ENCODE measurements at regions of chr11 and their contacts with region 1.

Region 1: DNA sequence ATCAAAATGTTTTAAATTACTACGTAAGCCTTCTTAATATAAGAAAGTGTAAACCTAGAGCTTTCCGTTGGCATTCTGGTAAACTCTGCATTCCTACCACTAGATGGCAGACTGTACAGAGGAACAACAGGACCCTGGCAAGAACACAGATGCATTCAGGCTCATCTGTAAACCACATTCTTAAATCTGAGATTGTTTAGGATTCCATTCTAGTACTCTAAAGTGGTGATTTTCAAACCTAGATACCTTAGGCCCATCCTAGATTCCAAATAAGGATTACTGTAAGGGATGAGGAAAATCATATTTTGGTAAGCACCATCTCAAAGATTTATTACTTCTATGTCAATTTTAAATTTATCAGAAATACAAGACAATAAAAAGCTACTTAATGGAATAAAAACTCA is 26.9 kb downstream of the PICALM start:
- DNase-seq: peak; percentile 68 to 81 (median 81)
- H3K4me3 ChIP-seq: peak overlapping the region in 1 of 3 experiments; percentile 31
- H3K4me3 Mint-ChIP-seq: no peak overlapping the region
- H3K27ac ChIP-seq: peak overlapping the region in 1 of 2 donors; percentile 66
- H3K27ac Mint-ChIP-seq: peak overlapping the region in 5 of 7 donors; percentile 11 to 77 (median 47)
- H3K4me1 ChIP-seq: peaks cover 52 to 64% of the 10 kb centered on the region in 2 donors
- H3K4me1 Mint-ChIP-seq: peaks cover 58% of the 10 kb centered on the region
- H3K27me3 ChIP-seq: no peaks in the 10 kb centered on the region
- H3K27me3 Mint-ChIP-seq: no peaks in the 10 kb centered on the region
- CTCF ChIP-seq: peak; percentile 83

Region 2: DNA sequence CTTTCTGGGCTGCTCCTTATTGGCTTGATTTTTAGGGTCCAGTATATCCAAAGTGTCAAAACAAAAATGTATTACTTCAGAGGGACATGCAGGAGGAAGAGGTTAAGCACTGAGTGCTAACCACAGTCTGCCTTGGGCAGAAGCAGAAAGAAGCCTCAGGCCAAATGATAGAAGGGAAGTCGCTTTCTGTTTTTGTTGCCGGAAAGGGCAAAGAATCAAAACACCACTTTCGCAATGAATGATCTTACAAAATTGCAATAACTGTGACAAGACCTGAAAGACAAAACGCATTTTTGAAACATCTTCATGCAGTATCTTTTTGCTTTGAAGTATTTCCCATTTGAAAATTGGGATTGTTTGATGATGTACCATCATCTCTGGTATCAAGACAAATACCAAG is 97.0 kb after region 1 on chr11:
- intact Hi-C with region 1: loop called in 1 of 2 experiments (anchors 5 kb)
- DNase-seq: peak; percentile 80 to 94 (median 85)
- H3K4me3 ChIP-seq: peak overlapping the region in 1 of 3 experiments; percentile 18
- H3K4me3 Mint-ChIP-seq: peak overlapping the region in 1 of 2 donors; percentile 58
- H3K27ac ChIP-seq: peak overlapping the region; percentile 3 to 93
- H3K27ac Mint-ChIP-seq: peak overlapping the region; percentile 92 to 99 (median 97)
- H3K4me1 ChIP-seq: peaks cover 98 to 100% of the 10 kb centered on the region in 2 donors
- H3K4me1 Mint-ChIP-seq: peaks cover 96% of the 10 kb centered on the region
- H3K27me3 ChIP-seq: no peaks in the 10 kb centered on the region
- H3K27me3 Mint-ChIP-seq: no peaks in the 10 kb centered on the region
- CTCF ChIP-seq: no peak

Region 3: GRCh38 chr11:86202013-86202336 is 160.0 kb after region 1 on chr11:
- intact Hi-C with region 1: loop called in 1 of 2 experiments (anchors 5 kb)
- DNase-seq: peak; percentile 62 to 73 (median 69)
- H3K4me3 ChIP-seq: peak overlapping the region; percentile 34 to 74 (median 71)
- H3K4me3 Mint-ChIP-seq: no peak overlapping the region
- H3K27ac ChIP-seq: peak overlapping the region; percentile 89 to 95
- H3K27ac Mint-ChIP-seq: no peak overlapping the region
- H3K4me1 ChIP-seq: peaks cover 64 to 78% of the 10 kb centered on the region in 2 donors
- H3K4me1 Mint-ChIP-seq: peaks cover 19% of the 10 kb centered on the region
- H3K27me3 ChIP-seq: no peaks in the 10 kb centered on the region
- H3K27me3 Mint-ChIP-seq: no peaks in the 10 kb centered on the region
- CTCF ChIP-seq: no peak

Region 4: DNA sequence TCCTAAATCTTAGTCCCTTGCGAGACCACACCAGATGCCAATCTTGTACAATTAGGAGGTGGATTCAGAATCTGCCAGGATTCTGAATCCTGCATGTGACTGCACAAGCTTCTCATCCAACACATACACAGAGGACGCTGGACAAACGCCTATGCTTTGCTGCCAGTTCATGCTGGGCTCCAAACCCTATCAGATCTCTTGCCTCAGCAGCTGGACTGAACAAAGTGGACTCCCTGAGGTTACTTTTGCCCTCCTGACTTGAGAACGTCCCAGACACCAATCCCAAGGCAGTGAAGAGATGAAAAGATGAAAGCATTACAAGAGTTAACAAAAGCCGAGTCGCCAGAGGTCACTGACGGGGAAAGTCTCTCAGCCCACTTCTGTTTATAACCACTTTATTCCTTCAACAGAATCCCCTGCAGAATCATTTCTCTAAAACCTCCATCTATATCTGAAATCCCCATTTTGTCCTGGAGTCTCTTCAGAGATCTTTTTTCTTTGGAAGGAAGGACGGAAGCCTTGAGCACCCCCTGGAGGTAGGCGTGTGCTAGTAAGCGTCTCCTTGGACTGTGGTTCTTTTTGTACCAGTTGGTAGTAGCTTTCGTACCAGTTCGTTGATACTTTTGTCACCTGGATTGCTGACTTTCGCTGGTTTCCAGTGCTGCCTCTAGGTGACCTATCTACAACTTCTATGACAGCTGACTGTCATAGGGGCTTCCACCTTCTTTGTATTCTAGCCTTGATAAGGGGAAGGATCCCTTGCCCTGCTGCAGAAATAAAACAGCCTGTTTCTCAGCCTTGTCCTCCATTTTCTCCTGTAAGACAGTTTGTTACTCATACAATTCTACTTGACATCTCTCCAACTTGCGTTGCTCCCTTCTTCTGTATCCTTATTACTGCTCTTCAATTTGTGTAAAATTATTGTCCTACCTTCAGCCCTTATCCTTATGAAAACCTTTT is 176.4 kb after region 1 on chr11:
- intact Hi-C with region 1: loop called (anchors 5 kb)
- DNase-seq: peak; percentile 58 to 77 (median 76)
- H3K4me3 ChIP-seq: peak overlapping the region in 1 of 3 experiments; percentile 47
- H3K4me3 Mint-ChIP-seq: peak overlapping the region; percentile 56 to 73
- H3K27ac ChIP-seq: no peak overlapping the region
- H3K27ac Mint-ChIP-seq: peak overlapping the region in 3 of 7 donors; percentile 10 to 68 (median 51)
- H3K4me1 ChIP-seq: peaks cover 19 to 22% of the 10 kb centered on the region in 2 donors
- H3K4me1 Mint-ChIP-seq: peaks cover 28% of the 10 kb centered on the region
- H3K27me3 ChIP-seq: no peaks in the 10 kb centered on the region
- H3K27me3 Mint-ChIP-seq: peaks cover 0 to 2% (median 0%) of the 10 kb centered on the region in 3 donors
- CTCF ChIP-seq: peak; percentile 94

Region 5: DNA sequence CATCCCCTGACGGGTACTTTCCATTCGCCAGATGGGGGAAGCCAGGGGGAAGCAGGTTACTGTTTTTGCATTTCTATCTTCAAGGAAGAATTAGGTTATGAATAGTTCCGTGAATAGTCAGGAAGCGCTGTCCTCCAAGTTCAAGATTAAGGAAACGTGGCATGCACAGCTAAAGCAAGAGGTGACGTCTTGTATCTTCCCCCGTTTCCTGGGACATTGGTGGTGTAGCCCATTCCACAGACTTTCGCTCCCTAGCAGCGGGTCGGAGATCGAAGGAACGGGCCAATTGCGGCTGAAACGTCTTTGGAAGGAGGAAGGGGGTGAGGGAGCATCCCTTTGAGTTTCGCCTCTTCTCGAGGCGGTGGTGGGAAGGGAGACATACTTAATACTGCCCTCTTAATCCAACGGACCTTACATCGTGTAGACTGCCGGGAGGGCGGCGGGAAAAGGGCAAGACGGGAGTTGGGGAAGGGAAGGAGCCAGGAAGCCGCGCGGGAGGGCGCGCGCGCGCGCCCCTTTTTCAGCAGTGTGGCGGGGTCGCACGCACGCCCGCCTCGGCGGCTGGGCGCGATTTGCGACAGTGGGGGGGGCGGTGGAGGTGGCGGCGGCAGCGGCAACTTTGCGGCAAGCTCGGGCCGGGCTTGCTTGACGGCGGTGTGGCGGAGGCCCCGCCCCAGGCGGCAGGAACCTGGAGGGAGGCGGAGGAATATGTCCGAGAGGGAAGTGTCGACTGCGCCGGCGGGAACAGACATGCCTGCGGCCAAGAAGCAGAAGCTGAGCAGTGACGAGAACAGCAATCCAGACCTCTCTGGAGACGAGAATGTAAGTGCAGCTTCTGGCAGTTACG is 202.8 kb after region 1 on chr11 and contains the start of gene EED:
- intact Hi-C with region 1: loop called in 1 of 2 experiments (anchors 5 kb)
- DNase-seq: peak; percentile 93 to 96 (median 95)
- H3K4me3 ChIP-seq: peak within 1 kb of the TSS; percentile 69 to 100 (median 99)
- H3K4me3 Mint-ChIP-seq: peak within 1 kb of the TSS in 1 of 2 donors; percentile 20
- H3K27ac ChIP-seq: peak within 1 kb of the TSS; percentile 95 to 99
- H3K27ac Mint-ChIP-seq: no peak within 1 kb of the TSS
- H3K4me1 ChIP-seq: peaks cover 23 to 25% of the 10 kb centered on the region in 2 donors
- H3K4me1 Mint-ChIP-seq: peaks cover 29% of the 10 kb centered on the region
- H3K27me3 ChIP-seq: no peaks in the 10 kb centered on the region
- H3K27me3 Mint-ChIP-seq: peaks cover 0 to 3% (median 0%) of the 10 kb centered on the region in 3 donors
- CTCF ChIP-seq: no peak
- polyA plus RNA-seq, gene EED: 2.3 to 17.8 (median 5.1) TPM

Measured in CD14-positive monocyte (primary cell).